ENCODE measurements at regions of chr9 and their contacts with region 1.

Region 1: DNA sequence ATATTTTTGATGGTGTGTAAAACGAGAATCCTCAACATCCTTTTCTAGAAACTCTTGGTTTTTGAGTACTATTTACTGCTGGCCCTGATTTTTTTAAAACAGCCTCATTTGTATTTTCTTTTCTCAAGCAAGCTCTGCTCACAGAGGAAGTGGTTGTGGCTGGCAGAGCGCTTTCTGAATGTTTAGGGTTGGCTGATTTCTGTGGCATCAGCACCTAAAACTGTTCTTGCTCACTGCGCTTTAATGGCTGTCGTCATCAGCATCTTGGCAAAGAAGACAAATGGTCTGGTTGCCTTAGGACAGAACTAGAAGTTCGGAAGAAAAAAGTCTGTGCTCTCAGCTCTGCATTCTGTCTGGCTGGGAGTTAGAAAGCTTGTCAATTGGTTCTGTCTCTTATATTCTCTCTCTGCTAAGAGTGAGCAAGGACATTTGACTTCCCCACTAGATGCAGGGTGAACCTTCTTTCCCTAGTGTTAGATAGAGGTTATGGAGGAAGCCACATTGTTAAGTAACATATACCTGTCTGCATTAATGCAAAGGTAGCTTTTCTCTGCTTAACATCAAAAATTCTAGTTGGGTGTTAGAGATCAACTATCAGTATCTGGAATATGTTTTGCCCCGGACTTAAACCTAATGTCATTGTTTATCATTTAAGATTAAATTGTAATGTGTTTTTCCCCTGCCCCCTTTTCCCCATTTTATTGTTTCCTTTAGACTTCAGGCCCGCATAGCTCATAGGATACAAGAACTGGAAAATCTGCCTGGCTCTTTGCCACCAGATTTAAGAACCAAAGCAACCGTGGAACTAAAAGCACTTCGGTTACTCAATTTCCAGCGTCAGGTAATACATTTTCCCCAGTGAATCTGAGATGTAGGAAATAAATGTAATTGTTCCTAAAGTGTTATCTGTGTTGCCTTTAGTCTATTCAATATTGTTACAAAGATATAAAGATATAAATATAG is 39.0 kb downstream of the SMARCA2 start:
- DNase-seq: peak; percentile 88
- ATAC-seq: peak; percentile 98
- H3K4me3 ChIP-seq: peak overlapping the region in 1 of 5 experiments; percentile 18
- H3K4me3 Mint-ChIP-seq: peak overlapping the region; percentile 61
- H3K27ac ChIP-seq: peak overlapping the region; percentile 61 to 76
- H3K27ac Mint-ChIP-seq: peak overlapping the region; percentile 77
- H3K4me1 ChIP-seq: peaks cover 17 to 19% of the 10 kb centered on the region in 2 donors
- H3K4me1 Mint-ChIP-seq: peaks cover 29% of the 10 kb centered on the region
- H3K27me3 ChIP-seq: no peaks in the 10 kb centered on the region
- H3K27me3 Mint-ChIP-seq: no peaks in the 10 kb centered on the region
- CTCF ChIP-seq: no peak

Region 2: DNA sequence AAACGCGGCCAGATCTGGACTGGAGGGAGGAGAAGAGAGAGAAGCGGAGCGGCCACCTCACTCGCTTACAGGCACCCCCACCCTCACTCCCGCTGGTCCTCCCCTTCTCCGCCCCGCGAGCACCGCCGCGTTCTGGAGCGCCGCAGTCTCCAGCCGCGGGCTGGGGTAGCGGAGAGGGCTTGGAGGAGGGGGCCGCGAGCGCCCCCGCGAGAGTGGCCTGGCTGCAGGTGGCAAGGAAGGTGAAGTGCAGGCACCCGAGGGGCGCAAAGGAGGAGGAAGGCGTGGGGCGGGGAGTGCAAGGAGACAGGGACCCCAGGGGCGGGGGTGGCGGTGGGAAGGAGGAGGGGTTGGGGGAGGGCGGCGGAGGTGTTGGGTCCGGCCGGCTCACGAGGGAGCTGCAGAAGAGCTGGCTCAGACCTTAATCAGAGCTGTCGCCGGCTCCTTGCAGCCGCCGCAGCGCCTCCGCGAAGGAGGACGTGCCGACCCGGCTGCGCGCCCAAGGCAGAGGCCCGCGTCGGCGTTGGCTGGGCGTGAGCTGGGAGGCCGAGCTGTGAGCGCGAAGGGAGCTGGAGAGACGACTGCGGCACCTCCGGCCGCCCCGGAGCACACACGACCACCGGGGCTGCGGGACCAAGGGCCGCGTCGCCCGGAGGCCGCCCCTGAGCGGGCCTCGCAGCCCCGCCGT is 1077.8 kb before region 1 on chr9 and contains the start of gene DMRT3:
- CTCF ChIA-PET with region 1: no interaction called
- POLR2A ChIA-PET with region 1: no interaction called
- intact Hi-C with region 1: no loop called
- DNase-seq: peak; percentile 15
- ATAC-seq: no peak
- H3K4me3 ChIP-seq: no peak within 1 kb of the TSS
- H3K4me3 Mint-ChIP-seq: no peak within 1 kb of the TSS
- H3K27ac ChIP-seq: no peak within 1 kb of the TSS
- H3K27ac Mint-ChIP-seq: no peak within 1 kb of the TSS
- H3K4me1 ChIP-seq: peaks cover 21 to 41% of the 10 kb centered on the region in 2 donors
- H3K4me1 Mint-ChIP-seq: peaks cover 9% of the 10 kb centered on the region
- H3K27me3 ChIP-seq: peaks cover 0 to 79% (median 67%) of the 10 kb centered on the region in 4 experiments
- H3K27me3 Mint-ChIP-seq: peaks cover 63% of the 10 kb centered on the region
- CTCF ChIP-seq: no peak
- total RNA-seq, gene DMRT3: not detected in 2 replicates

Region 3: GRCh38 chr9:2043881-2044462 is 10.2 kb before region 1 on chr9:
- CTCF ChIA-PET with region 1: interaction called, 7 read pairs
- POLR2A ChIA-PET with region 1: no interaction called
- intact Hi-C with region 1: loop called (anchors 1 kb)
- DNase-seq: peak; percentile 48
- ATAC-seq: peak; percentile 66
- H3K4me3 ChIP-seq: peak overlapping the region in 3 of 5 experiments; percentile 4 to 30 (median 26)
- H3K4me3 Mint-ChIP-seq: peak overlapping the region; percentile 81
- H3K27ac ChIP-seq: peak overlapping the region; percentile 40 to 72
- H3K27ac Mint-ChIP-seq: peak overlapping the region; percentile 87
- H3K4me1 ChIP-seq: peaks cover 22 to 30% of the 10 kb centered on the region in 2 donors
- H3K4me1 Mint-ChIP-seq: peaks cover 37% of the 10 kb centered on the region
- H3K27me3 ChIP-seq: no peaks in the 10 kb centered on the region
- H3K27me3 Mint-ChIP-seq: no peaks in the 10 kb centered on the region
- CTCF ChIP-seq: no peak

Region 4: GRCh38 chr9:2066312-2067273 is 12.4 kb after region 1 on chr9:
- CTCF ChIA-PET with region 1: interaction called, 14 read pairs
- POLR2A ChIA-PET with region 1: no interaction called
- intact Hi-C with region 1: no loop called
- DNase-seq: peak; percentile 25
- ATAC-seq: no peak
- H3K4me3 ChIP-seq: no peak overlapping the region
- H3K4me3 Mint-ChIP-seq: no peak overlapping the region
- H3K27ac ChIP-seq: no peak overlapping the region
- H3K27ac Mint-ChIP-seq: peak overlapping the region; percentile 41
- H3K4me1 ChIP-seq: no peaks in the 10 kb centered on the region
- H3K4me1 Mint-ChIP-seq: no peaks in the 10 kb centered on the region
- H3K27me3 ChIP-seq: no peaks in the 10 kb centered on the region
- H3K27me3 Mint-ChIP-seq: no peaks in the 10 kb centered on the region
- CTCF ChIP-seq: peak; percentile 29